Activated naive CD4-positive, alpha-beta T cell treated with anti-CD3 and anti-CD28 coated beads for 36 hours (primary cell): ENCODE measurements at regions of chrX and their contacts with region 1.

Region 1: DNA sequence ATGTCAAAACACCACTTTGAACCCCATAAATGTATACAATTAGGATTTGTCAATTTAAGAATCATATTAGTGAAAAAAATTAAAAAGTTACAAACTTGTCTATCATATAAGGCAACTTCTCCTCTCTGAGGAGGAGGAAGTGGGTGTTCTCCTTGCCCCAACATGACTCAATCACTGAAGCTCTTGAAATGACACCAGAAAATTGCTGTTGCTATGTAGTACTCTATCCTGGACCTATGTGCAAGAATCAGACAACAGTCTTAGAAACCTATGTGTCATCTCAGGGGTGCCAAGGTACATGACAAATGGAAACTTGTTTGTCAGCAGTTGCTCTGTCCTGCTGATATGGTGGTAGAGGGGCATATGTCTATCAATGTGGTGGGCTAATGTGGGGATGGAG is 47.7 kb downstream of the HMGB3 start:
- DNase-seq: peak; percentile 10
- H3K4me3 Mint-ChIP-seq: no peak overlapping the region
- H3K27ac Mint-ChIP-seq: peak overlapping the region; percentile 7
- H3K4me1 Mint-ChIP-seq: peaks cover 10% of the 10 kb centered on the region
- H3K27me3 Mint-ChIP-seq: no peaks in the 10 kb centered on the region

Region 2: DNA sequence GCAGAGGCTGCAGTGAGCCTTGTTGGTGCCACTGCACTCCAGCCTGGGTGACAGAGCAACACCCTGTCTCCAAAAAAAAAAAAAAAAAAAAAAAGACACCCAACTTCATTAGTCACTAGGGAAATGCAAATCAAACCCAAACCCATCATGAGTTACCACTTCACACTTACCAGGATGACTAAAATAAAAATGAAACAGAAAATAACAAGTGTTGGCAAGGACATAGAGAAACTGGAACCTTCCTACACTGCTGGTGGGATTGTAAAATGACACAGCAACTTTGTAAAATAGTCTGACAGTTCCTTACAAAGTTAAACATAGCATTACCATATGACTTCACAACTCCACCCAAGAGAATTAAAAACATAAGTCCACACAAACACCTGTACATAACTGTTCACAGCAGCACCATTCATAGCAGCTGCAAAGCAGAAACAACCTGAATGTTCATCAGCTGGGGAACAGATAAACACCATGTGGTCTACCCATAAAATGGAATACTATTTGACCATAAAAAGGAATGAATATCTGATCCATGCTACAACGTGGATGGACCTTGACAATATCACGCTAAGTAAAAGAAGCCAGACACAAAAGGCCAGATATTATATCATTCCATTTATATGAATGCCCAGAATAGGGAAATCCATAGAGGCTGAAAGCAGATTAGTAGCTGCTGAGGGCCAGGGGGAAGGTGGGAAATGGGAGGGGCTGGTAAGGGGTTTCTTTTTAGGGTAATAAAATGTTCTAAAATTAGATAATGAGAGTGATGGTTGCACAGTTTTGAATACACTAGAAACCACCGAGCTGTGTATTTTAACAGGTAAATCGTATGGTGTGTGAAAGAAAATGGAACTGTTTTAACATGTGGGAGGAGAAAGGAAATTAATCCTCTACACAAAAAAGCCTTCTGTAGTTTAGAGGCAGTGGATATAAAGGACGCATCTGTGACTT is 150.7 kb before region 1 on chrX:
- CTCF ChIA-PET with region 1: no interaction called
- intact Hi-C with region 1: loop called (anchors 1 kb)
- DNase-seq: peak; percentile 8
- H3K4me3 Mint-ChIP-seq: no peak overlapping the region
- H3K27ac Mint-ChIP-seq: peak overlapping the region; percentile 54
- H3K4me1 Mint-ChIP-seq: peaks cover 36% of the 10 kb centered on the region
- H3K27me3 Mint-ChIP-seq: no peaks in the 10 kb centered on the region

Region 3: DNA sequence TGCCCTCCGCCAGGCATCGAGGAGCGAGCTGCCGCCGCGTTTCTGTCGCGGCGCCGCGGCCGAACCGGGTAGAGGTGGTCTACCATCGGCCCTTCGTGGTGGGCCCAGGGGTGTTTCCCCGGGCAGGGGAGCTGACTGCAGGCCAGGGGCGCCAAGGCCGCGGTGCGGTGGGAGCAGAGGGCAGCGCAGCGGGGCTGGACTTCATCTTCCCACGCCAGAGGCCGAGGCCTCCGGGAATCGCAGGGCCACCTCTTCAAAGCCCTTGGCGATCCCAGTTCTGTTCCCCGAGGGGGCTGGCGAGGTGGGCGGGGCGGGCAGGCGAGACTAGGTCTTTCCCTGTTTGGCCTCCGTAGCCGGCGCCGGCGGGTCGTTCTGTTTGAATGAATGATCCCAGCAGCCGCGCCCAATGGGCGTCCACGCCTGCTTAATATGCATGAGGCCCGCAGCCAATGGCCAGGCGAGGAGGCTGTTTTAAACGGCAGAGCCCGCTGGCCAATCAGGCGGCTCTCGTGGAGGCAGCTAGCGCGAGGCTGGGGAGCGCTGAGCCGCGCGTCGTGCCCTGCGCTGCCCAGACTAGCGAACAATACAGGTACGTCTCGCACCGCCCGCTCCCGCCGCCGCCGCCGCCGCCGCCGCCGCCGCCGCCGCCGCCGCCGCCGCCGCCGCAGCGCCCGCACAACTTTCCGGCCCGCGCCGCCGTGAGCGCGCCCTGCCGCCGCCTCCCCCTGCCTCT is 47.9 kb before region 1 on chrX and contains the start of gene HMGB3:
- CTCF ChIA-PET with region 1: no interaction called
- intact Hi-C with region 1: no loop called
- DNase-seq: peak; percentile 90
- H3K4me3 Mint-ChIP-seq: peak within 1 kb of the TSS; percentile 69
- H3K27ac Mint-ChIP-seq: no peak within 1 kb of the TSS
- H3K4me1 Mint-ChIP-seq: peaks cover 13% of the 10 kb centered on the region
- H3K27me3 Mint-ChIP-seq: peaks cover 5% of the 10 kb centered on the region
- total RNA-seq, gene HMGB3: 30.8 to 33.9 TPM